Heart right ventricle (tissue), 16 donors: ENCODE measurements at regions of chr14 and their contacts with region 1.

Region 1: GRCh38 chr14:91323671-91324605 is 79.4 kb upstream of the GPR68 start:
- DNase-seq: peak; percentile 87 to 89
- ATAC-seq: peak; percentile 85 to 96 (median 91)
- H3K4me3 ChIP-seq: peak overlapping the region in 9 of 10 donors; percentile 12 to 60 (median 46)
- H3K27ac ChIP-seq: peak overlapping the region; percentile 23 to 90 (median 79)
- H3K4me1 ChIP-seq: peaks cover 4 to 77% (median 56%) of the 10 kb centered on the region in 9 donors
- H3K27me3 ChIP-seq: peaks cover 0 to 2% (median 0%) of the 10 kb centered on the region in 7 donors
- CTCF ChIP-seq: peak in 8 of 9 donors; percentile 91 to 98 (median 96)

Region 2: GRCh38 chr14:91373591-91374254 is 49.8 kb after region 1 on chr14:
- intact Hi-C with region 1: loop called in 2 of 10 experiments (anchors 5 kb)
- DNase-seq: no peak
- ATAC-seq: peak in 3 of 8 donors; percentile 19 to 52 (median 33)
- H3K4me3 ChIP-seq: peak overlapping the region in 1 of 10 donors; percentile 8
- H3K27ac ChIP-seq: peak overlapping the region in 8 of 10 donors; percentile 7 to 71 (median 46)
- H3K4me1 ChIP-seq: peaks cover 7 to 99% (median 73%) of the 10 kb centered on the region in 9 donors
- H3K27me3 ChIP-seq: peaks cover 0 to 36% (median 0%) of the 10 kb centered on the region in 7 donors
- CTCF ChIP-seq: no peak

Region 3: GRCh38 chr14:91568626-91569025 is 244.7 kb after region 1 on chr14:
- intact Hi-C with region 1: no loop called
- DNase-seq: no peak
- ATAC-seq: no peak
- H3K4me3 ChIP-seq: no peak overlapping the region
- H3K27ac ChIP-seq: no peak overlapping the region
- H3K4me1 ChIP-seq: no peaks in the 10 kb centered on the region
- H3K27me3 ChIP-seq: peaks cover 0 to 31% (median 4%) of the 10 kb centered on the region in 7 donors
- CTCF ChIP-seq: no peak